ENCODE measurements at regions of chr13 and their contacts with region 1.

Region 1: GRCh38 chr13:97109841-97110492 is 112.2 kb upstream of the MBNL2 start:
- DNase-seq: peak; percentile 74
- ATAC-seq: peak; percentile 95
- H3K4me3 Mint-ChIP-seq: peak overlapping the region; percentile 24
- H3K27ac Mint-ChIP-seq: no peak overlapping the region
- H3K4me1 Mint-ChIP-seq: peaks cover 3% of the 10 kb centered on the region
- H3K27me3 Mint-ChIP-seq: peaks cover 20% of the 10 kb centered on the region
- CTCF ChIP-seq: peak; percentile 67

Region 2: DNA sequence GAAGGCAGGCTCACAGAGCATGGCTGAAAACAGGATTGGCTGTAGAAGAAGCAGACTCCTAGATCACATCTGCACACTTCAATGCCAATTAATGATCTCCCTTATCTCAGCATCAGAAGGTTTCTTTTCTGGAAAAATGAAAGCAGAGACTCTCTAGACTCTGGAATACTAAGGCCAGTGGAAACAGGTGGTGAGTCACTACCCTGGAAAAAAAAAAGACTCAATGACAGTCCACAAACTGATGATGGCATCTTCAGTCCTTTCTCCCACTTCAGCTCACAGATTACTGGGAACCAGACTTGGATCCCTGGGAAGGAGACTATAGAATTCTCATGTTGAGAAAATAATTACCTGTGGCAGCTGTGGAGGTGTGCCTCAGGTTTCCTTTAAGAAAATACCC is 64.7 kb after region 1 on chr13:
- CTCF ChIA-PET with region 1: no interaction called
- POLR2A ChIA-PET with region 1: no interaction called
- intact Hi-C with region 1: no loop called
- DNase-seq: no peak
- ATAC-seq: no peak
- H3K4me3 Mint-ChIP-seq: no peak overlapping the region
- H3K27ac Mint-ChIP-seq: no peak overlapping the region
- H3K4me1 Mint-ChIP-seq: no peaks in the 10 kb centered on the region
- H3K27me3 Mint-ChIP-seq: peaks cover 22% of the 10 kb centered on the region
- CTCF ChIP-seq: no peak

Region 3: GRCh38 chr13:97344265-97345175 is 234.6 kb after region 1 on chr13:
- CTCF ChIA-PET with region 1: interaction called, 79 read pairs
- POLR2A ChIA-PET with region 1: no interaction called
- intact Hi-C with region 1: loop called (anchors 1 kb)
- DNase-seq: no peak
- ATAC-seq: no peak
- H3K4me3 Mint-ChIP-seq: no peak overlapping the region
- H3K27ac Mint-ChIP-seq: no peak overlapping the region
- H3K4me1 Mint-ChIP-seq: no peaks in the 10 kb centered on the region
- H3K27me3 Mint-ChIP-seq: no peaks in the 10 kb centered on the region
- CTCF ChIP-seq: no peak

Region 4: DNA sequence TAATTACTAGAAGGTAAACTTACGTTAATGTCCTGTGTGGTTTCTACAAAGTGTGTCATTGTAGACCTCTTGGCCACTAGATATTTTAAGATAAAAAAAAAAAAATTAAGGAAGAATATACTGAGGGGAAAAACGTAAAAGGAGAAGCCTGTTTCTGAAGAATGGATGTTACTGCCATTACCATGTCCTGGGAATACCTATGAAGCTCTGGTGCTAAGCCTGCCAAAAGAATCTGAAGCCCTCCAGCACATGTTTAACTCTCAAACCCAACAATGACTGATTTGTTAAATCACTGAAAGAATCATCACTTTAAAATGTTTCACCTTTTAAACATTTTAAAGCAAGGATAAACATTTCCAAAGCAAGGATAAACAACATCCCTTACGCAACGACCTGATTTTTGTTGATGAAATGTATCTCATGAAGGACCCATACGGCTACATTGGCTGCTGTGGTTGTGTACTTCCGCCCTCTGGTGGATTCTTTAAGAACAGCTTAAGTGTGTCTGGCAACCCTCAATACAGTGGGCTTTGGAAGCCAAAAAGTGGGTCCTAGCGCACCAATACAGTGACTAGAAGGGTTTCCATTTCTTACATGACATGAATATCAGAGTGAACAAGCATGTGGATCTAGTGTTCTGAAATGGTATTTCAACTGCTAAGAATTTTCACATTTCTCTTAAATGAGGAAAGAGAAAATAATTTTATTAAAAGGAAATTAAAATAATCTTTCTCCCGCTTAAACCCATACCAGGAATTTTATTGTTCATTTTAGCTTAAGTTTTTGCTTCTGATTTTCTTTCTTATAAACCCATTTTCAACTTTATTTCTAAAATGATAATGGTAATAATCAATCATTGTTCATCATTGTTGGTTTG is 249.5 kb after region 1 on chr13:
- CTCF ChIA-PET with region 1: interaction called, 183 read pairs
- POLR2A ChIA-PET with region 1: interaction called, 5 read pairs
- intact Hi-C with region 1: loop called (anchors 1 kb)
- DNase-seq: no peak
- ATAC-seq: peak; percentile 94
- H3K4me3 Mint-ChIP-seq: no peak overlapping the region
- H3K27ac Mint-ChIP-seq: no peak overlapping the region
- H3K4me1 Mint-ChIP-seq: no peaks in the 10 kb centered on the region
- H3K27me3 Mint-ChIP-seq: no peaks in the 10 kb centered on the region
- CTCF ChIP-seq: peak; percentile 33

Region 5: DNA sequence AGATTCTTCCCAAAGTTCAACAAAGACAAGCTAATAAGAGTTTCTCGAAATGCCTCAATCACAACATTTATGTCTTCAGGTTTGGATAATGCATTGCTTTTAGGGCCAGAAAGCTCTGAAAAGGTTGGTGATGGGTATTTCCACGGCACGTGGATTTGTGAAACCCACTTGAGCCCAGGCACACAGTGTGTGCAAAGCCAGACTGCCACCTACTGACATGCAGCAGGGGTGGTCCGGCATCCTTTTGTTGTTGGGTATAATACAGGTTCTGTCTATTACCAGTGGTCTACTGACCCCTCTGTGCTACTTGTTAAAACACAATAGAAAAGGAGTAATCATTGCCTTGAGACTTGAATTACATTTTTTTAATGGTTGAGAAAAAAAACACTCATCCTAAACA is 549.6 kb after region 1 on chr13:
- CTCF ChIA-PET with region 1: interaction called, 9 read pairs
- POLR2A ChIA-PET with region 1: no interaction called
- intact Hi-C with region 1: loop called (anchors 2 kb)
- DNase-seq: no peak
- ATAC-seq: no peak
- H3K4me3 Mint-ChIP-seq: no peak overlapping the region
- H3K27ac Mint-ChIP-seq: no peak overlapping the region
- H3K4me1 Mint-ChIP-seq: no peaks in the 10 kb centered on the region
- H3K27me3 Mint-ChIP-seq: peaks cover 3% of the 10 kb centered on the region
- CTCF ChIP-seq: no peak

Region 6: GRCh38 chr13:97810152-97810551 is 700.2 kb after region 1 on chr13:
- CTCF ChIA-PET with region 1: no interaction called
- POLR2A ChIA-PET with region 1: no interaction called
- intact Hi-C with region 1: loop called (anchors 1 kb)
- DNase-seq: no peak
- ATAC-seq: no peak
- H3K4me3 Mint-ChIP-seq: no peak overlapping the region
- H3K27ac Mint-ChIP-seq: no peak overlapping the region
- H3K4me1 Mint-ChIP-seq: no peaks in the 10 kb centered on the region
- H3K27me3 Mint-ChIP-seq: peaks cover 7% of the 10 kb centered on the region
- CTCF ChIP-seq: no peak

Region 7: DNA sequence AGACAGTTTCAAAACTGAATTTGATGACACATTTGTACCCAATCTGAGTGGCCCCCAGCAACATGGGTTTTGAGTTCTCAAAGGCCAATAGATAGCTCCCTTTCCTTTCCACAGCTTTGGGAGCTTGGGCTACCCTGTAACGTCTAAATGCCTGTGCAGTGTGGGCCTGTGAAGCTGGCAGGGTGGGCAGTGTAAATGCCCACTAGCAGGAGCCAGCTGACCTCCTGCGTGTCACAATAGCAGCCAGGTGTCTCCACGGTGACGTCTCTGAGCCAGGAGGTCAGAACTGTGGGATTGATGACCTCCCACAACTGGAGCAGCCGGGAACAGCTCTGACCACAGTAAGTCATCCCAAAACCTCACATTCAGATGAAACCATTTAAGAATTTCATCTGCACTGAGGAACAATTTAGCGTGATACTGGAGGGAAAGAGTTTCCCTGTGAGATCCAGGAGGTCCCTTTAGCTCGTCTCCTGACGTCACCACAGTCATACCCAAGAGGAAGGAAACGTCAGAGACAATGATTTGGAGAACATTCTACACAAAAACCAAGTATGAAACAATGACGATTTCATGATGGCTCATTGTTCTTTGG is 843.5 kb after region 1 on chr13 and contains the start of gene IPO5:
- CTCF ChIA-PET with region 1: no interaction called
- POLR2A ChIA-PET with region 1: no interaction called
- intact Hi-C with region 1: no loop called
- DNase-seq: no peak
- ATAC-seq: no peak
- H3K4me3 Mint-ChIP-seq: no peak within 1 kb of the TSS
- H3K27ac Mint-ChIP-seq: no peak within 1 kb of the TSS
- H3K4me1 Mint-ChIP-seq: peaks cover 2% of the 10 kb centered on the region
- H3K27me3 Mint-ChIP-seq: no peaks in the 10 kb centered on the region
- CTCF ChIP-seq: no peak
- total RNA-seq, gene IPO5: 139 and 152 TPM in 2 replicates